Posterior vena cava (tissue), 2 donors: ENCODE measurements at regions of chr18 and their contacts with region 1.

Region 1: DNA sequence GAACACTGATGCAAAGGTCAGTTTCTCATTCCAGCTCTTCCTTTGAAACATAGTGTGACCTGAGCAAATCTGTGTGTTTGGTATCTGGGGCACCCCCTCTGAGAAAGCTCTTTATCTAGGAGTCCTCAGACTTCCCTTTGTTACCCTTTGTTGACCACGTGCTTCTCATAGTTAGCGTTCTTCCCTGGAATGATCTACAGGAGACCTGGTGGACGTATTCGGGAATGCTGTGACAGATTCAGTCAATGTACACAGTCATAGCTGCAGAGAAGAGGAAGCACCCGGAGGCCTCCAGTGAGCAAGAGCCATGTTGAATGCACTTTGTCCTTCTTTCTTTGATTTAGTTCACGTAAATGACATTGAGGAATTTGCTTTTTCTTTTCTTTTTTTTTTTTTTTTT is 10.7 kb upstream of the CHMP1B start:
- DNase-seq: no peak

Region 2: GRCh38 chr18:11468617-11469016 is 371.9 kb before region 1 on chr18:
- intact Hi-C with region 1: loop called in 1 of 2 experiments (anchors 5 kb)
- DNase-seq: no peak

Region 3: GRCh38 chr18:11872479-11873136 is 32.1 kb after region 1 on chr18:
- intact Hi-C with region 1: no loop called
- DNase-seq: no peak